ENCODE measurements at regions of chr10 and their contacts with region 1.

Region 1: DNA sequence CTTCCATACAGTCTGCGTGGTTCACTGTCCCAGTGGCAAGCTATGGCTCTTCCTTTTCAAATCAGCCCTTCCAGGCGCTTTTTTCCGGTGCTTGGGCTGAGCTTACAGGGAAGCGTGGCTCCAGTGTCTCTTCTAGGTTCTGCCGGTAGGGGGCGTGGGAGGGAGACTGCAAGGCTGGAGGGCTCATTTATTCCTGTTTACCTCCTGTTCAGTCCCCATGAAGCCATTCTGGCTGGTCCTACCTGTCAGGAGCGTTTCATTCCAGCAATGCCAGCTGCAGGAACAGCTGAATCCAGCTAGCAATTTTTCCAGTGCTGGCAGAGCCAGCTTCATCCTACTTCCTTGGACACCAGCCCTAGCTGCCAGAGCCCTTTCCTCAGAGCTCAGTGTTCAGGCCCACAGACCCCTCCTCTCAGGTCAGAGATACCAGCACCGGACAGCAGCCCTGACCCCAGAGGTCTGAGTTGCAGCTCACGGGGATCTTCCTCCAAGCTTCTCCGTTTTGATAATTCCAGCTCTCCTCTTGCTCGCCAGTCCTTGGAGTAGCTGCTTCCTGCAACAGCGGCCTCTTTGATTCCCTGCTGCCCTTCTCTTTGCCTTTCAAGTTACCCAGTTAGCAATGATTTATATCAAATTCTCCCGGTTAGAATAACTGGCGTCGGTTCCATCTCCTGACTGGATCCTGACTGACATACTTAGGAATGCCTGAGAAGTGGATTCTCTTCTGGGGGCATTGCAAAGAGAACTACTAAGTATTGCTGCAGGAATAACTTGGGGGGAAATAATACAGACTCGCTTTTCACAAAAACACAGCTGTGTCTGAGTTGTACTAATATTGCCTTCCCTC is 129.8 kb downstream of the FRMD4A start:
- DNase-seq: peak in 1 of 2 experiments; percentile 92
- H3K4me3 ChIP-seq: no peak overlapping the region
- H3K27ac ChIP-seq: no peak overlapping the region
- H3K4me1 ChIP-seq: peaks cover 0 to 5% (median 2%) of the 10 kb centered on the region in 4 experiments; a peak in 4 of 7 replicates
- H3K27me3 ChIP-seq: peaks cover 0 to 1% (median 0%) of the 10 kb centered on the region in 4 experiments; a peak in 1 of 7 replicates
- CTCF ChIP-seq: peak; percentile 76 to 87 (median 83)
- EP300 ChIP-seq: no peak
- POLR2A ChIP-seq: no peak
- RAD21 ChIP-seq: peak; percentile 62 to 68

Region 2: GRCh38 chr10:13961869-13962268 is 239.1 kb before region 1 on chr10:
- CTCF ChIA-PET with region 1: no interaction called
- POLR2A ChIA-PET with region 1: no interaction called
- DNase-seq: no peak
- H3K4me3 ChIP-seq: no peak overlapping the region
- H3K27ac ChIP-seq: no peak overlapping the region
- H3K4me1 ChIP-seq: peaks cover 0 to 6% (median 4%) of the 10 kb centered on the region in 4 experiments; a peak in 4 of 7 replicates
- H3K27me3 ChIP-seq: no peaks in the 10 kb centered on the region
- CTCF ChIP-seq: no peak
- EP300 ChIP-seq: no peak
- POLR2A ChIP-seq: no peak
- RAD21 ChIP-seq: no peak

Region 3: GRCh38 chr10:14225379-14226150 is 24.6 kb after region 1 on chr10:
- CTCF ChIA-PET with region 1: interaction called, 17 read pairs
- POLR2A ChIA-PET with region 1: no interaction called
- DNase-seq: no peak
- H3K4me3 ChIP-seq: no peak overlapping the region
- H3K27ac ChIP-seq: no peak overlapping the region
- H3K4me1 ChIP-seq: no peaks in the 10 kb centered on the region
- H3K27me3 ChIP-seq: no peaks in the 10 kb centered on the region
- CTCF ChIP-seq: no peak
- EP300 ChIP-seq: no peak
- POLR2A ChIP-seq: no peak
- RAD21 ChIP-seq: no peak

Region 4: GRCh38 chr10:14240253-14241189 is 39.6 kb after region 1 on chr10:
- CTCF ChIA-PET with region 1: interaction called, 28 read pairs
- POLR2A ChIA-PET with region 1: no interaction called
- DNase-seq: peak in 1 of 2 experiments; percentile 52
- H3K4me3 ChIP-seq: no peak overlapping the region
- H3K27ac ChIP-seq: no peak overlapping the region
- H3K4me1 ChIP-seq: peaks cover 2 to 10% (median 4%) of the 10 kb centered on the region in 4 experiments; a peak in 6 of 7 replicates
- H3K27me3 ChIP-seq: no peaks in the 10 kb centered on the region
- CTCF ChIP-seq: peak in 1 of 3 experiments; percentile 24; a peak in 1 of 4 replicates
- EP300 ChIP-seq: no peak
- POLR2A ChIP-seq: no peak
- RAD21 ChIP-seq: peak; percentile 16 to 39; a peak in 3 of 4 replicates

Region 5: DNA sequence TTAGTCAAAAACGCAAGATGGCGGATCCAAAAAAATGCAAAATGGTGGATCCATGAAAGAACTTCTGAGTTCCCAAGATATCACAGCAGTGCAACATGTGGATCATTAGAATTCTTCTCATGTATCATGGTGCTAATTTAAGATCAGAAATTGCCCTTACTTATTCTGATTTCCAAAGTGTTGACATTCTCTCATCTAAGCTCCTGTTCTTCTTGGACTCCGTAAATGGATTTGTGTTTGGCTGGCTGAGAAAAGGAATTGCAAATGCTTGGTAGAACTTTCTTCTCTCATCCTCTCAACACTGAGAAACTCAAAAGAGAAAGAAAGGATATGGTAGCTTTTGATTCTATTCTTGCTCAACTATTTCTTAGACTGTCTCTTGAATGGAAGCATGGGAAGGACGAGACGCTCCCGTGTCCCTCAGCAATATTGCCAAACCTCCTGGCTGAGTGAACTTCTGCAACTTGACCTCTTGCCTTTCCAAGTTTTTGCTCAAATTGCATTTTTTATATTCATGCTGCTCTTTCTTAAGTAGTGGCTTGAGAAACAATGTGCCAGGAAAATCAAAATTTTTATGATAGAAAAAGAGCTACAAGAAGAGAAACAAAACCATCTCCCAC is 85.1 kb after region 1 on chr10:
- CTCF ChIA-PET with region 1: no interaction called
- POLR2A ChIA-PET with region 1: no interaction called
- DNase-seq: no peak
- H3K4me3 ChIP-seq: no peak overlapping the region
- H3K27ac ChIP-seq: no peak overlapping the region
- H3K4me1 ChIP-seq: no peaks in the 10 kb centered on the region
- H3K27me3 ChIP-seq: no peaks in the 10 kb centered on the region
- CTCF ChIP-seq: no peak
- EP300 ChIP-seq: no peak
- POLR2A ChIP-seq: no peak
- RAD21 ChIP-seq: no peak

Region 6: DNA sequence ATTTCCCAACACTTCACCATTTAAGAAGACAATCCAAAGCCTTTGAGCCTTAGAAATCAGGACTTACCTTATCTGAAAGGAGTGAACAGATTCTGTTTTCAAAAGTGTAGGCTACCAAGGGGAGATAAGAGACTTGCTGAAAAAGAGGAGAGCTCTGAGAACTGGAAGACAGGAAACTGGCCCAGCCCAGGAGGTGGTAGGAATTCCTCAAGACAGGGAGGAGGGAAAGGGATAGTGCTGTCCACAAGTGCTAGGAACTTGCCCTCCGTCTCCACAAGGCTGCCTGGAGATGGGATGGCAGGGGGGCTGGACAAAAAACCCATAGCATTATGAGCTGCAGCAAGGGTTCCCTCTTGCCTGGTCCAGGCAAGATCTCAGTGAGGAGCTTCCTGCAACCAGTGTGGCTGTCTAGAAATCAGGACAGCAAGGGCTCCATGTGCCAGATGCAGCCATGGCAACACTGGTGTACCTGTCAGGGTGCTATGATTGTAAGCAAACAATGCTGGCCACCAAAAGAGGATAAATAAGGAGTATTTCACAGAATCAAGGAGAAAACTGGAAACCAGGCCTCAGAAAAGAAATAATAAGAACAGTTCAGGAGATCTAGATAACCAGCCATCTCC is 152.5 kb after region 1 on chr10:
- CTCF ChIA-PET with region 1: interaction called, 11 read pairs
- POLR2A ChIA-PET with region 1: no interaction called
- DNase-seq: no peak
- H3K4me3 ChIP-seq: no peak overlapping the region
- H3K27ac ChIP-seq: no peak overlapping the region
- H3K4me1 ChIP-seq: 0 out of 7 replicates have a peak, but pooled peaks cover 0 to 2% (median 0%) of the 10 kb centered on the region in 4 experiments
- H3K27me3 ChIP-seq: no peaks in the 10 kb centered on the region
- CTCF ChIP-seq: no peak
- EP300 ChIP-seq: no peak
- POLR2A ChIP-seq: no peak
- RAD21 ChIP-seq: no peak

Region 7: GRCh38 chr10:14459665-14460064 is 258.7 kb after region 1 on chr10:
- CTCF ChIA-PET with region 1: interaction called, 12 read pairs
- POLR2A ChIA-PET with region 1: no interaction called
- DNase-seq: no peak
- H3K4me3 ChIP-seq: no peak overlapping the region
- H3K27ac ChIP-seq: no peak overlapping the region
- H3K4me1 ChIP-seq: no peaks in the 10 kb centered on the region
- H3K27me3 ChIP-seq: no peaks in the 10 kb centered on the region
- CTCF ChIP-seq: no peak
- EP300 ChIP-seq: no peak
- POLR2A ChIP-seq: no peak
- RAD21 ChIP-seq: no peak

Region 8: GRCh38 chr10:14478604-14479003 is 277.7 kb after region 1 on chr10:
- CTCF ChIA-PET with region 1: interaction called, 143 read pairs
- POLR2A ChIA-PET with region 1: no interaction called
- DNase-seq: peak in 1 of 2 experiments; percentile 46
- H3K4me3 ChIP-seq: no peak overlapping the region
- H3K27ac ChIP-seq: no peak overlapping the region
- H3K4me1 ChIP-seq: no peaks in the 10 kb centered on the region
- H3K27me3 ChIP-seq: no peaks in the 10 kb centered on the region
- CTCF ChIP-seq: peak; percentile 56 to 82 (median 75)
- EP300 ChIP-seq: no peak
- POLR2A ChIP-seq: no peak
- RAD21 ChIP-seq: peak; percentile 97 to 98

Region 9: GRCh38 chr10:14486777-14487487 is 286.0 kb after region 1 on chr10:
- CTCF ChIA-PET with region 1: interaction called, 143 read pairs
- POLR2A ChIA-PET with region 1: no interaction called
- DNase-seq: peak in 1 of 2 experiments; percentile 43
- H3K4me3 ChIP-seq: no peak overlapping the region
- H3K27ac ChIP-seq: no peak overlapping the region
- H3K4me1 ChIP-seq: no peaks in the 10 kb centered on the region
- H3K27me3 ChIP-seq: no peaks in the 10 kb centered on the region; a peak in 1 of 7 replicates
- CTCF ChIP-seq: no peak
- EP300 ChIP-seq: no peak
- POLR2A ChIP-seq: no peak
- RAD21 ChIP-seq: no peak

Measured in H1 (cell line).